Dorsolateral prefrontal cortex (tissue), 120 donors: ENCODE measurements at regions of chr9 and their contacts with region 1.

Region 1: GRCh38 chr9:5042641-5043277 is 57.7 kb downstream of the JAK2 start:
- DNase-seq: no peak
- H3K4me3 ChIP-seq: peak overlapping the region in 9 of 59 donors; percentile 14 to 48 (median 28)
- H3K27ac ChIP-seq: peak overlapping the region in 1 of 59 donors; percentile 4
- H3K27me3 ChIP-seq: no peaks in the 10 kb centered on the region
- CTCF ChIP-seq: no peak

Region 2: GRCh38 chr9:5205071-5205470 is 162.3 kb after region 1 on chr9:
- intact Hi-C with region 1: no loop called
- DNase-seq: no peak
- H3K4me3 ChIP-seq: no peak overlapping the region
- H3K27ac ChIP-seq: no peak overlapping the region
- H3K27me3 ChIP-seq: peaks cover 0 to 11% (median 0%) of the 10 kb centered on the region in 45 donors
- CTCF ChIP-seq: no peak

Region 3: GRCh38 chr9:5352637-5353455 is 310.1 kb after region 1 on chr9:
- intact Hi-C with region 1: loop called in 1 of 2 experiments (anchors 10 kb)
- DNase-seq: no peak
- H3K4me3 ChIP-seq: no peak overlapping the region
- H3K27ac ChIP-seq: no peak overlapping the region
- H3K27me3 ChIP-seq: no peaks in the 10 kb centered on the region
- CTCF ChIP-seq: no peak